ENCODE measurements at regions of chr18 and their contacts with region 1.

Region 1: GRCh38 chr18:39172695-39173421 is 1607.3 kb upstream of the CELF4 start:
- DNase-seq: peak; percentile 45
- ATAC-seq: no peak
- H3K4me3 ChIP-seq: no peak overlapping the region
- H3K27ac ChIP-seq: no peak overlapping the region
- H3K4me1 ChIP-seq: no peaks in the 10 kb centered on the region
- H3K27me3 ChIP-seq: no peaks in the 10 kb centered on the region
- CTCF ChIP-seq: no peak
- EP300 ChIP-seq: no peak; a peak in 1 of 4 replicates
- POLR2A ChIP-seq: no peak
- RAD21 ChIP-seq: no peak

Region 2: GRCh38 chr18:39561126-39561525 is 388.3 kb after region 1 on chr18:
- CTCF ChIA-PET with region 1: no interaction called
- POLR2A ChIA-PET with region 1: no interaction called
- in situ Hi-C with region 1: no loop called
- intact Hi-C with region 1: loop called (anchors 5 kb)
- DNase-seq: no peak
- ATAC-seq: no peak
- H3K4me3 ChIP-seq: no peak overlapping the region
- H3K27ac ChIP-seq: no peak overlapping the region
- H3K4me1 ChIP-seq: no peaks in the 10 kb centered on the region
- H3K27me3 ChIP-seq: no peaks in the 10 kb centered on the region
- CTCF ChIP-seq: no peak
- EP300 ChIP-seq: no peak
- POLR2A ChIP-seq: no peak
- RAD21 ChIP-seq: no peak